Endothelial cell of umbilical vein (primary cell): ENCODE measurements at regions of chr14 and their contacts with region 1.

Region 1: DNA sequence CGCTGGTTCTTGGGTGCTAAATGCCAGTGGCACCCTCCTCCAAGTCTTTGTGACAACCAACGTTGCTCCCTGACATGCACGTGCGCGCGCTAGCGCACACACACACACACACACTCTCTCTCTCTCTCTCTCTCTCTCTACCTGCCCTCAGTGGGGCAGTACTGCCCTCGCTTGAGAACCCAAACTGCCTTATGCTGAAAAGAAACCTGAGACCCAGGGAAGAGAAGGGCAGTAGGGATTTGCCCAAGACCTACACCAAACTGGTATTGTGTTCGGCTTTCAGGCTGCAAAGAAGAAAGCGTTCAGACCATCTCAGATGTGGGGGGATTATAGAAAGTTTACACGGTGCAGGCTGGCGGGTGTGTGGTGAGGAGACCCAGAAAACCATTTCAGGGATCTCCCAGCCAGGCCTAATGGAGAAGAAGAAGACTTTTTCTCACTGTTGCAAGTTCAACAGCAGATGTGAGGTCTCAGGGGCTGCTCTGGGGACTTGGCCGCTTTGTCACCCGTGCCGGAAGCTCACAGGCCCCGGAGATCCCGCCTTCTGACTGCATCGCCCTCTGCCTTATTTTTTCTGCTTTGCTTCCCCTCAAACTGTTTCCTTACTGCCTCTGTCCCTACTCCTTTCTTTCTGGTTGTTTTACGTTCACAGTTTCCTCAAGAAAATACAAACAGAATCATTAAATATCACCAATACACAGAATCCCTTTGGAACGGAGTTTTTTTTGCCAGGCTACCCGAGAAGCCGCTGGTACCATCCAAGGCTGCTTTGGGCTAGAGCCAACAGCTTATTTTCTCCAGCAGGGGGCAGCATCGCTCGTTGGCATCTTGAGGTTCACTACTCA is 82.4 kb downstream of the PPM1A start:
- DNase-seq: peak; percentile 78
- H3K4me3 ChIP-seq: peak overlapping the region; percentile 30 to 66 (median 41)
- H3K27ac ChIP-seq: no peak overlapping the region
- H3K4me1 ChIP-seq: peaks cover 2% of the 10 kb centered on the region
- H3K27me3 ChIP-seq: peaks cover 36 to 38% of the 10 kb centered on the region in 2 experiments
- CTCF ChIP-seq: peak; percentile 82 to 84
- POLR2A ChIP-seq: no peak

Region 2: GRCh38 chr14:60294411-60295069 is 36.9 kb before region 1 on chr14:
- CTCF ChIA-PET with region 1: interaction called, 10 read pairs
- POLR2A ChIA-PET with region 1: no interaction called
- dilution Hi-C with region 1: no loop called
- intact Hi-C with region 1: loop called (anchors 2 kb)
- DNase-seq: peak; percentile 32
- H3K4me3 ChIP-seq: no peak overlapping the region
- H3K27ac ChIP-seq: no peak overlapping the region
- H3K4me1 ChIP-seq: peaks cover 15% of the 10 kb centered on the region
- H3K27me3 ChIP-seq: no peaks in the 10 kb centered on the region
- CTCF ChIP-seq: no peak
- POLR2A ChIP-seq: no peak

Region 3: GRCh38 chr14:60300019-60300418 is 31.4 kb before region 1 on chr14:
- CTCF ChIA-PET with region 1: interaction called, 10 read pairs
- POLR2A ChIA-PET with region 1: no interaction called
- dilution Hi-C with region 1: no loop called
- intact Hi-C with region 1: loop called (anchors 2 kb)
- DNase-seq: no peak
- H3K4me3 ChIP-seq: no peak overlapping the region
- H3K27ac ChIP-seq: no peak overlapping the region
- H3K4me1 ChIP-seq: peaks cover 1% of the 10 kb centered on the region
- H3K27me3 ChIP-seq: no peaks in the 10 kb centered on the region
- CTCF ChIP-seq: no peak
- POLR2A ChIP-seq: no peak

Region 4: DNA sequence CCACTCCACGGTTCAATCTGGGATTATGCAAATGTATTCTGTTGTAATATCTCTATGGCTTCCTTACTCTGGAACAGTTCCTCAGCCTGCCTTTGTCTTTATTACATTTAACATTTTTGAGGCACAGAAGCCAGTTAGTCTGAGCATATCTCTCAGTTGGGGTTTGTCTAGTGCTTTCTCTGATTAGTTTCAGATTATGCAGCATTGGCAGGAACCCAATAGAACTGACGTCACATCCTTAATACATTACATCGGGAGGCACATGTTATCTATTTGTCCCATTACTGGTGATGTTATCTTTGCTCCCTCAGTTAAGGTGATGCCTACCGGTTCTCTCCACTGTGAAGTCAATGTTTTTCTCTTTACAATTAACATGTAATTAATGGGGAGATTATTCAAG is 20.0 kb before region 1 on chr14:
- CTCF ChIA-PET with region 1: interaction called, 12 read pairs
- POLR2A ChIA-PET with region 1: no interaction called
- dilution Hi-C with region 1: no loop called
- intact Hi-C with region 1: no loop called
- DNase-seq: peak; percentile 36
- H3K4me3 ChIP-seq: no peak overlapping the region
- H3K27ac ChIP-seq: no peak overlapping the region
- H3K4me1 ChIP-seq: no peaks in the 10 kb centered on the region
- H3K27me3 ChIP-seq: peaks cover 7 to 10% of the 10 kb centered on the region in 2 experiments
- CTCF ChIP-seq: no peak
- POLR2A ChIP-seq: no peak

Region 5: GRCh38 chr14:60349663-60350365 is 18.4 kb after region 1 on chr14:
- CTCF ChIA-PET with region 1: interaction called, 43 read pairs
- POLR2A ChIA-PET with region 1: no interaction called
- dilution Hi-C with region 1: no loop called
- intact Hi-C with region 1: no loop called
- DNase-seq: peak; percentile 51
- H3K4me3 ChIP-seq: no peak overlapping the region
- H3K27ac ChIP-seq: no peak overlapping the region
- H3K4me1 ChIP-seq: peaks cover 4% of the 10 kb centered on the region
- H3K27me3 ChIP-seq: peaks cover 8 to 24% of the 10 kb centered on the region in 2 experiments
- CTCF ChIP-seq: peak; percentile 54 to 59
- POLR2A ChIP-seq: no peak

Region 6: DNA sequence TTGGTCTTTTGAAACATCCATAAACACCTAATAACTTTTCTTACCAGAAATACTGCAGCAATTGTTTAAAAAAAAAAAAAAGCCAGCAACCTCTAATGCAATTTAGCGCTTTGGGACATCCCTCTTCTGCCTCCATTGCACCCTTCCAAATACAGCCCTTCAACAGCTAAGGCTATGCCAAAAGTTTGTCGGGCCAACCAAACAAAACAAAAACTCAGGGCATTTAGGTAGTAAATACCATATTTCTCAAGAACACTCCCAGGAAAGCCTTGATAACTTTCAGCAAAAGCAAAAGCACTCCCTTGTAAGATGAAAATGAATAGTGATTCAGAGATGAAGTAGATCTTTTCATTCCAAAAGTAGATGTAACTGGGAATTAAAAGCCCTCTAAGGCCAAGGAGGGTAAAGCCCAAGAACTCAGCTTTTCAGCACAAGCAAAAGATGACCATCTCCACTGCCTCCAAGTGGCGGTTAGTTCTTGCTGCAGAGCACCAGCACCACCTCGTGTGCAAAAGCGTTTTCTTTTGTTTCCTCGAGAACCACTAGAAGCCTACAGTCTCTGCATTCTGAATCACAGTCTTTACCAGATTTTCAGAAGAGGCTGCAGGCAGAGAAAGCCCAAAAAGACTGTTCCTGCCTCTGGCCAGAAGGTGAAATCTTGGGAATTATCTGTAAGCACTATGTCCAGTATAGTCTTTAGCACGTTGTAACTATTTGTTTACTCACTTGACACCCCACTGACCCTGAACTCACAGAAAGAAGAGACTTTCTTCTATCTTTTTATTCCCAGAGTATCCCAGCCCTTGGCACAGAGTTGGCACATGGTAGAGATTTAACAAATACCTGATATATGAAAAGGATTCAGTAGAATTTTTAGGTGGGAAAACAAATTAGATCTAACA is 230.7 kb after region 1 on chr14:
- CTCF ChIA-PET with region 1: interaction called, 19 read pairs
- POLR2A ChIA-PET with region 1: no interaction called
- dilution Hi-C with region 1: no loop called
- intact Hi-C with region 1: loop called (anchors 1 kb)
- DNase-seq: peak; percentile 59
- H3K4me3 ChIP-seq: no peak overlapping the region
- H3K27ac ChIP-seq: no peak overlapping the region
- H3K4me1 ChIP-seq: no peaks in the 10 kb centered on the region
- H3K27me3 ChIP-seq: peaks cover 0 to 8% of the 10 kb centered on the region in 2 experiments
- CTCF ChIP-seq: peak; percentile 45 to 70
- POLR2A ChIP-seq: no peak

Region 7: DNA sequence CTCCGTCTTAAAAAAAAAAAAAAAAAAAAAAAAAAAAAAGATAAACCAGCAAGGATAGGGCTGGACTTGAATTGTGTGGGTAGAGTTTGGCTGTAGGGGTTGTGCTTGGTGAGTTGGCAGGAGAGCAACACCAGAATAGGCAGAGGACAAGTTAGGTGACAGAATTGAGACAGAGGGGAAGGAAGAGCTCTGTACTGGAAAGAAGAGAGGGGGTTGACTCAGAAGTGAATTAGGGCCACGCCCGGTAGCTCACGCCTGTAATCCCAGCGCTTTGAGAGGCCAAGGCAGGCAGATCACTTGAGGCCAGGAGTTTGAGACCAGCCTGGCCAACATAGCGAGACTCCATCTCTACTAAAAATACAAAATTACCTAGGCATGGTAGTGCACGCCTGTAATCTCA is 955.8 kb after region 1 on chr14:
- CTCF ChIA-PET with region 1: interaction called, 6 read pairs
- POLR2A ChIA-PET with region 1: no interaction called
- dilution Hi-C with region 1: no loop called
- intact Hi-C with region 1: loop called (anchors 5 kb)
- DNase-seq: no peak
- H3K4me3 ChIP-seq: no peak overlapping the region
- H3K27ac ChIP-seq: no peak overlapping the region
- H3K4me1 ChIP-seq: peaks cover 10% of the 10 kb centered on the region
- H3K27me3 ChIP-seq: no peaks in the 10 kb centered on the region
- CTCF ChIP-seq: no peak
- POLR2A ChIP-seq: no peak